MCF 10A (cell line): ENCODE measurements at regions of chr1 and their contacts with region 1.

Region 1: DNA sequence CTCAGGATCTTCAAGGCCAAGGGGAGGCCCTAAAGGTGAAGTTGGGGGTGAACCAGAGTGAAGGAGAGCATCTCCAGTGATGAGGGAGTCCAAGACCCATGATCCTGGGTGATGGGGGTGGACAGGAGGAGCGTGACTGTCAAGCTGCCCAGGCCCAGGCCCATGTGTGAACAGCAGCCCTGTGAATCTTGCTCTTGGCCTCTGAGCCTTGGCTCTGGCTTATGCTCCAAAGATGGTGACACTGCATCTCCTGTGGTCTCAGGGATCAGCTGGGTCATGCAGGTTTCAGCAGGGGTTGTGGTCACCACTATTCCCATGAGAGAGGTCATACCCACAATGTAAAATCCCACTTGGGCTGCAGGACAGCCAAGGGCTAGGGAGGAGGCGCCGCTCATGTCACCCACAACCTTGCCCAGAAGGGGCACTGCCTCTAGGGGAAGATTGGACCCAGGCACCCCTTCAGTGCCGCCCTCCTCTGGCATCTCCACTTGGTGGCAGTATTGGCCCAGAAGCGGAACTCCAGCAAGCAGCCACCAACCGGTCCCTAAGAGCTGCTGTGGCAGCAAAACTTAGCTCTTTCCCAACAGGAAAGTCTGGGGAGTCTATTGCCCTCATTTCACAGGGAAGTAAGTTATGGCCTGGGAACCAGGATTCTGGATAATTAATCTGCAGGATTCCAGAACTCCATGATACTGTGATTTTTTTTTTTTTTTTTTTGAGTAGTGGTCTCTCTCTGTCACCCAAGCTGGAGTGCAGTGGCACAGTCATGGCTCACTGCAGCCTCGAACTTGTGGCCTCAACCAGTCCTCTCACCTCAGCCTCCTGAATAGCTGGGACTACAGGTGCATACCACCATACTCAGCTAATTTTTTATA is 7.5 kb upstream of the WNT3A start:
- DNase-seq: peak; percentile 94
- H3K4me3 Mint-ChIP-seq: no peak overlapping the region
- H3K27ac Mint-ChIP-seq: no peak overlapping the region
- H3K4me1 Mint-ChIP-seq: peaks cover 17% of the 10 kb centered on the region
- H3K27me3 Mint-ChIP-seq: peaks cover 1% of the 10 kb centered on the region
- CTCF ChIP-seq: peak; percentile 100

Region 2: DNA sequence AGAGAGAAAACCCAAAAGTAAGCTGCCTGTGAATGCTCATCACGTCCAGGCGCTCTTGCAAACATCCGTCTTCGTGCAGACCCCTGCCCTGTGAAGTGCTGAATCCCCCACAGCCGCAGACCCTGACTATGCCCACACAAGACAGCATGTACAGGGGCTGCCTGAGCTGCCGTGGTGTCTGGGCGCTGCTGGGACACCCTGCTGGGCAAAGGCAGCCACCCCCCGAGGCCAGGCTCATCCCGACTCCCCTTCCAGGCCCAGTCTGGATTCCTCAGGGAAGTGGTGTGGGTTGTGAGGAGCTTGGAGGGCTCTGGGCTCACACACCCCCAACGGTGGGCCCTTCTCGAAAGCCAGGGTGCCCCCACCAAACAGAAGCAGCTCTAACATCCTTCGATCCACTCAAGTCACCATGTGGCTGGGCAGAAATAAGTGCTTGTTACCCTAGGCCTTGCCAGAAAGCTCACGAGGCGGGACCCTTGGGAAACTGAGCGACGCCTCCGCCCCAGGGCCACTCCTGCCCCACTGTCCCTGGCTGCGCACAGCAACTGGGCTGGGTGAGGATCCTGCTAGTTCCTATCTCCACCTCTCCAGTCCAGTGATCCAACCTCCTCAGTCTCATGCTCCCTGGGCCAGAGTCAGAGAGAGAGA is 46.8 kb before region 1 on chr1:
- CTCF ChIA-PET with region 1: interaction called, 10 read pairs
- POLR2A ChIA-PET with region 1: interaction called, 11 read pairs
- intact Hi-C with region 1: no loop called
- DNase-seq: no peak
- H3K4me3 Mint-ChIP-seq: no peak overlapping the region
- H3K27ac Mint-ChIP-seq: no peak overlapping the region
- H3K4me1 Mint-ChIP-seq: peaks cover 11% of the 10 kb centered on the region
- H3K27me3 Mint-ChIP-seq: peaks cover 41% of the 10 kb centered on the region
- CTCF ChIP-seq: no peak

Region 3: DNA sequence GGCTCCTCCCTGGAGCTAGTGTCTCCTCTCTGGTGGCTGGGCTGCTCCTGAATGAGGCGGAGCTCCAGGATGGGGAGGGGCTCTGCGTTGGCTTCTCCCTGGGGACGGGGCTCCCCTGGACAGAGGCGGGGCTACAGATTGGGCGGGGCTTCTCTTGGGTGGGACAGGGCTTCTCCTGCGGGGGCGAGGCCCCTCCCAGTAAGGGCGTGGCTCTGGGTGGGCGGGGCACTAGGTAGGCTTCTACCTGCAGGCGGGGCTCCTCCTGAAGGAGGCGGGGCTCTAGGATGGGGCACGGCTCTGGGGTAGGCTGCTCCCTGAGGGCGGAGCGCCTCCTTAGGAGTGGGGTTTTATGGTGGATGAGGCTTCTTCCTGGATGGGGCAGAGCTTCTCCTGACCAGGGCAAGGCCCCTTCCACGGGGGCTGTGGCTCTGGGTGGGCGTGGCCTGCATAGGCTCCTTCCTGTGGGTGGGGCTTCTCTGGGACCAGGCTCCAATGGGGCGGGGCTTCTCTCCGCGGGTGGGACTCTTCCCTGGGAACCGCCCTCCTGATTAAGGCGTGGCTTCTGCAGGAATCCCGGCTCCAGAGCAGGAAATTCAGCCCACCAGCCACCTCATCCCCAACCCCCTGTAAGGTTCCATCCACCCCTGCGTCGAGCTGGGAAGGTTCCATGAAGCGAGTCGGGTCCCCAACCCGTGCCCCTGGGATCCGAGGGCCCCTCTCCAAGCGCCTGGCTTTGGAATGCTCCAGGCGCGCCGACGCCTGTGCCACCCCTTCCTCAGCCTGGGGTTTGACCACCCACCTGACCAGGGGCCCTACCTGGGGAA is 60.6 kb after region 1 on chr1:
- CTCF ChIA-PET with region 1: interaction called, 22 read pairs
- POLR2A ChIA-PET with region 1: interaction called, 5 read pairs
- intact Hi-C with region 1: no loop called
- DNase-seq: peak; percentile 52
- H3K4me3 Mint-ChIP-seq: no peak overlapping the region
- H3K27ac Mint-ChIP-seq: no peak overlapping the region
- H3K4me1 Mint-ChIP-seq: no peaks in the 10 kb centered on the region
- H3K27me3 Mint-ChIP-seq: peaks cover 38% of the 10 kb centered on the region
- CTCF ChIP-seq: no peak

Region 4: DNA sequence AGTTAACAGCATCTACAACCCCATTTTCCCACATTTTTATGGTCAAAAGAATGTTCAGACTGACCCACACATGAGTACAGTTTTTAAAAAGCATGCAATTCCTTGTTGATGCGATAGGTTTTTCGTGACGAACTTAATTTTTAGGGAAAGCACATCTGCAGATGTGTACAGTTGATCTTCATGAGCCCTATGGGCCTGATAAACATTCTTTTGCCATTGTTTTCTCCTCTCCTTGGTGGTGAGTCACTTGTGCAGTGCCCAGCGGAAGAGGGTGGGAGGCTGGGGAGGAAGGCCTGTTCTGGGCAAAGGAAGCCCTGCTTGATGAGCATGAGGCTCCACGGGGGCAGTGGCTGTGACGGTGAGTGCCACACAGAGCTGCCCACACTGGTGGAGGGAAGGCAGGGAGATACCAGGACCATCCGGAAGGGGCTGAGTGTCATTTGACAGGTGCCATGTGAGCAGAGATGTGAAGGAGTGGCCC is 88.5 kb after region 1 on chr1:
- CTCF ChIA-PET with region 1: interaction called, 72 read pairs
- POLR2A ChIA-PET with region 1: interaction called, 114 read pairs
- intact Hi-C with region 1: no loop called
- DNase-seq: peak; percentile 95
- H3K4me3 Mint-ChIP-seq: peak overlapping the region; percentile 77
- H3K27ac Mint-ChIP-seq: peak overlapping the region; percentile 78
- H3K4me1 Mint-ChIP-seq: peaks cover 82% of the 10 kb centered on the region
- H3K27me3 Mint-ChIP-seq: no peaks in the 10 kb centered on the region
- CTCF ChIP-seq: no peak

Region 5: DNA sequence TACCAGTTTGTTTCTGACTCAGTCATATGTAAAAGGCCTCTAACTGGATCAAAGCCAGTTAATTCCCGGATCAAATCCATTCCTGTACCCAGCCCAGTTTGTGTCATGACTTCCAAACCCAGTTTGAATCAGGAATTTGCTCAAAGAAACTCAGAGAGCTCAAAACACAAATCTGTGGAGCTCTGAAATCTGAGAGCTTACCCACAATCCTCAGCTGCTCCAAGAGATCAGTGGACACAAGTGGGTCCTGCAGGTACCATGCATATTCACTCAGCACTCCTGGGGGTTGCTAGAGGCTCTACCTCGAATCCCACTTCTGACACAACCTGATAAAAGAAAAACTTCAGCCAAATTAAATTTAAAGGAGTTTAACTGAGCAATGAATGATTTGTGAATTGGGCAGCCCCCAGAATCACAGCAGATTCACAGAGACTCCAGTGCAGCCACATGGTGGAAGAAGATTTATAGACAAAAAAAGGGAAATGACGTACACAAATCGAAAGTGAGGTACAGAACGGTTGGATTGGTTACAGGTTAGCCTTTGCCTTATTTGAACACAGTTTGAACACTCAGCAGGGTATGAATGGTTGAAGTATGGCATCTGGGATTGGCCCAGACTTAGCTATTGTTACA is 121.7 kb after region 1 on chr1:
- CTCF ChIA-PET with region 1: interaction called, 23 read pairs
- POLR2A ChIA-PET with region 1: interaction called, 4 read pairs
- intact Hi-C with region 1: no loop called
- DNase-seq: no peak
- H3K4me3 Mint-ChIP-seq: no peak overlapping the region
- H3K27ac Mint-ChIP-seq: no peak overlapping the region
- H3K4me1 Mint-ChIP-seq: no peaks in the 10 kb centered on the region
- H3K27me3 Mint-ChIP-seq: no peaks in the 10 kb centered on the region
- CTCF ChIP-seq: no peak

Region 6: GRCh38 chr1:228165372-228166169 is 166.3 kb after region 1 on chr1 and contains the start of gene IBA57:
- CTCF ChIA-PET with region 1: interaction called, 39 read pairs
- POLR2A ChIA-PET with region 1: interaction called, 6 read pairs
- intact Hi-C with region 1: no loop called
- DNase-seq: peak; percentile 100
- H3K4me3 Mint-ChIP-seq: peak within 1 kb of the TSS; percentile 70
- H3K27ac Mint-ChIP-seq: peak within 1 kb of the TSS; percentile 86
- H3K4me1 Mint-ChIP-seq: peaks cover 46% of the 10 kb centered on the region
- H3K27me3 Mint-ChIP-seq: no peaks in the 10 kb centered on the region
- CTCF ChIP-seq: peak; percentile 99
- total RNA-seq, gene IBA57: 12.0 and 16.5 TPM in 2 replicates

Region 7: DNA sequence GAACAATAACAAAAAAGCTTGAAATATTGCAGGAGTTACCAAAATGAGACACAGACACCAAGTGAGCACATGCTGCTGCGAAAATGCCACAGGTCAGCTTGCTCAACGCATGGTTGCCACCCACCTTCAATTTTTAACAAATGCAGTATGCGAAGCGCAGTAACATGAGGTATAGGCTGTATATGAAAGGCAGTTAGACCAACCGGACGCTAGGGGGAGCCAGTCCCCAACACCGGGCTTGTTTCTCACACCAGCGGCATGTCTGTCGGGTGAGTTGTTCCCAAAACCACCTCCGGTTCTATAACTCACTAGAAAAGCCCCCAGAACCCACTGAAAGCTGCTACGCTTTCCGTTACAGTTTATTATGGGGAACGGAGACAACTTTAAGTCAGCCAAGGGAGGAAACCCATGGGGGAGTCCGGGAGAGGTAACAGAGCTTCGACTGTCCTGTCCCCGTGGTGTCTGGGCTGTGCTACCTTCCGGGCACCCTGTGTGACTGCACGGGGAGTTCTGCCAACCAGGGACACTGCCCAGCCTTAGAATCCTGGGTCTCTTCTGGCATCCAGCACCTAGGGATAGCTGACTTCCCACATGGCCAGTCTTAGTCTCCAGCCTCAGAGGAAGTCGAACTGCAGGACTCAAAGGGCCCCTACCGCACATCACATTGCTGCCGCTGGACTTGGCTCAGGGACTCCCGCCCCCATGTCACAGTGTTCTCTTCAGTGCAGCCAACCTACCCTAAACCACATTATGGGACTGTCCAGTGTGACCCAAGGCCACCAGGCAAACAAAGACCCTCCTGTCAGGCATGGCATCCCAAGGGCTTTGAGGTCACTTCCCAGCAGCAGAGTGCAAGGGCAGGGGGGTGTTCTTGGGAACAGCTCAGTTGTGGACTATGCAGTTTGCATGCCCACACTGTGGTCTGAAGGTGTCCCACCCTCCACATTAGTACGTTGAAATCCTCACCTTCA is 501.9 kb after region 1 on chr1:
- CTCF ChIA-PET with region 1: interaction called, 3 read pairs
- POLR2A ChIA-PET with region 1: no interaction called
- intact Hi-C with region 1: loop called (anchors 5 kb)
- DNase-seq: peak; percentile 97
- H3K4me3 Mint-ChIP-seq: peak overlapping the region; percentile 20
- H3K27ac Mint-ChIP-seq: no peak overlapping the region
- H3K4me1 Mint-ChIP-seq: peaks cover 10% of the 10 kb centered on the region
- H3K27me3 Mint-ChIP-seq: no peaks in the 10 kb centered on the region
- CTCF ChIP-seq: peak; percentile 99

Region 8: GRCh38 chr1:228734881-228735801 is 735.8 kb after region 1 on chr1 and contains the start of gene RHOU:
- CTCF ChIA-PET with region 1: no interaction called
- POLR2A ChIA-PET with region 1: no interaction called
- intact Hi-C with region 1: no loop called
- DNase-seq: peak; percentile 55
- H3K4me3 Mint-ChIP-seq: peak within 1 kb of the TSS; percentile 72
- H3K27ac Mint-ChIP-seq: peak within 1 kb of the TSS; percentile 61
- H3K4me1 Mint-ChIP-seq: peaks cover 12% of the 10 kb centered on the region
- H3K27me3 Mint-ChIP-seq: peaks cover 9% of the 10 kb centered on the region
- CTCF ChIP-seq: peak; percentile 98
- total RNA-seq, gene RHOU: 2.1 and 3.6 TPM in 2 replicates